H1 (cell line): ENCODE measurements at regions of chr11 and their contacts with region 1.

Region 1: GRCh38 chr11:125257190-125257579 is 92.6 kb downstream of the PKNOX2 start:
- DNase-seq: peak in 1 of 2 experiments; percentile 59
- H3K4me3 ChIP-seq: no peak overlapping the region
- H3K27ac ChIP-seq: no peak overlapping the region
- H3K4me1 ChIP-seq: peaks cover 3 to 18% (median 7%) of the 10 kb centered on the region in 4 experiments; a peak in 6 of 7 replicates
- H3K27me3 ChIP-seq: peaks cover 0 to 11% (median 8%) of the 10 kb centered on the region in 4 experiments; a peak in 3 of 7 replicates
- CTCF ChIP-seq: peak; percentile 57 to 79 (median 68)
- EP300 ChIP-seq: no peak
- POLR2A ChIP-seq: no peak
- RAD21 ChIP-seq: peak; percentile 64 to 78

Region 2: DNA sequence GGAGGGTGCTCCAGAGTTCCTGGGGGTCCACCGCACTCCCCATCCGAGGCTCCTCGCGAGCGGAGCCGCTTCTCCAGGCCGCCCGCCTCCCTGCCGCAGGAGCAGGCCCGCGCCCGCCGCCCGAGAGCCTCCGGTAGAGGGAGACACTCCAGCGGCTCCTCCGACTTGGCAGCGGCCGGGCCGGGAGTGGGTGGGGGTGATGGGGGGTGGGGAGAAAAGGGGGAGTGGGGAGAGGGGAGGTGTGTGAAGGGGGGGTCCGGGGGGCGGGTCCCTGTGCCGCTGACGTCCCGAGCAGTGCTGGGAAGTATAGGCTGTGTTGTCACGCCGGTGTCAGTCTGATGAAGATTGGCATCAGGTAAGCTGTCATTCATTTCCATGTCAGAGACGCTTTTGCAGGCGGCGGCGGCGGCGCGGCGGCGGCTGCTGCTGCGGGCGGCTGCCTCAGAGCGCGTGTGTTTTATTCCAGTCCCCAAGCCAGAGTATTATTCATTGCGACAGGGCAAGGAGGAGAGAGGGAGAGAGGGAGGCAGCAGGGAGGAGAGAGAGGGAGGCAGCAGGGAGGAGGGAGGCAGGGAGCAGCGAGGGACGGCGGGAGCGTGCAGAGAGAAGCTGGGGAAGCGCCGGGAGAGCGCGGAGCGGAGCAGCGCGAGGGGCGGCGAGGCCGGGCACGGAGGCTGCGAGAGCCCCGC is 92.6 kb before region 1 on chr11 and contains the start of gene PKNOX2:
- CTCF ChIA-PET with region 1: interaction called, 11 read pairs
- POLR2A ChIA-PET with region 1: interaction called, 15 read pairs
- DNase-seq: peak in 1 of 2 experiments; percentile 93
- H3K4me3 ChIP-seq: peak within 1 kb of the TSS; percentile 52 to 74 (median 60)
- H3K27ac ChIP-seq: peak within 1 kb of the TSS; percentile 87
- H3K4me1 ChIP-seq: peaks cover 21 to 44% (median 29%) of the 10 kb centered on the region in 4 experiments
- H3K27me3 ChIP-seq: peaks cover 14 to 44% (median 40%) of the 10 kb centered on the region in 4 experiments
- CTCF ChIP-seq: peak; percentile 45 to 72 (median 67)
- EP300 ChIP-seq: peak in 1 of 2 experiments; percentile 6; a peak in 1 of 3 replicates
- POLR2A ChIP-seq: no peak
- RAD21 ChIP-seq: peak; percentile 54 to 68; a peak in 3 of 4 replicates
- total RNA-seq, gene PKNOX2: 1.9 and 2.0 TPM in 2 replicates

Region 3: GRCh38 chr11:125214571-125215565 is 42.3 kb before region 1 on chr11:
- CTCF ChIA-PET with region 1: interaction called, 22 read pairs
- POLR2A ChIA-PET with region 1: no interaction called
- DNase-seq: no peak
- H3K4me3 ChIP-seq: no peak overlapping the region
- H3K27ac ChIP-seq: no peak overlapping the region; the same call in 1 of the 2 replicates
- H3K4me1 ChIP-seq: peaks cover 8 to 24% (median 14%) of the 10 kb centered on the region in 4 experiments
- H3K27me3 ChIP-seq: no peaks in the 10 kb centered on the region; a peak in 2 of 7 replicates
- CTCF ChIP-seq: no peak
- EP300 ChIP-seq: no peak
- POLR2A ChIP-seq: no peak
- RAD21 ChIP-seq: no peak

Region 4: DNA sequence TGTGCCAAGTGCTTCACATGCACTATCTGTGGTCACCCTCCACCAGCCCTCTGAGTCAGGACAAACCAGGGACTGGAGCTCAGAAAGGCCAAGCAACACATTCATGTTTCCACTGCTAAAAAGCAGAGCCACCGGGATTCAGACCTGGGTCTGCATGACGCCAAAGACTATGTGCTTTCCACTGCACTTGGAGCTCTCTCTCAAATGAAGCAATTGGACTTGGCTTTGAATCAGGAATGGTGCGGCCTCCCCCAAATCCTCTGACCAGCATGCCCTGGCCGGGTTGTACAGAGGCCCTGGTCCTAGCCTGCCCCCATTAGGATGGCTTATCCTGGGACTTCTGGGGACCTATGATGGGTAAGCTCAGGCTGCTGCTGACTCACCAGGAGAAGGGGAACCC is 11.9 kb before region 1 on chr11:
- CTCF ChIA-PET with region 1: interaction called, 22 read pairs
- POLR2A ChIA-PET with region 1: interaction called, 3 read pairs
- DNase-seq: no peak
- H3K4me3 ChIP-seq: no peak overlapping the region
- H3K27ac ChIP-seq: no peak overlapping the region
- H3K4me1 ChIP-seq: peaks cover 0 to 12% (median 3%) of the 10 kb centered on the region in 4 experiments; a peak in 5 of 7 replicates
- H3K27me3 ChIP-seq: 0 out of 7 replicates have a peak, but pooled peaks cover 0 to 2% (median 0%) of the 10 kb centered on the region in 4 experiments
- CTCF ChIP-seq: no peak
- EP300 ChIP-seq: no peak
- POLR2A ChIP-seq: no peak
- RAD21 ChIP-seq: no peak

Region 5: DNA sequence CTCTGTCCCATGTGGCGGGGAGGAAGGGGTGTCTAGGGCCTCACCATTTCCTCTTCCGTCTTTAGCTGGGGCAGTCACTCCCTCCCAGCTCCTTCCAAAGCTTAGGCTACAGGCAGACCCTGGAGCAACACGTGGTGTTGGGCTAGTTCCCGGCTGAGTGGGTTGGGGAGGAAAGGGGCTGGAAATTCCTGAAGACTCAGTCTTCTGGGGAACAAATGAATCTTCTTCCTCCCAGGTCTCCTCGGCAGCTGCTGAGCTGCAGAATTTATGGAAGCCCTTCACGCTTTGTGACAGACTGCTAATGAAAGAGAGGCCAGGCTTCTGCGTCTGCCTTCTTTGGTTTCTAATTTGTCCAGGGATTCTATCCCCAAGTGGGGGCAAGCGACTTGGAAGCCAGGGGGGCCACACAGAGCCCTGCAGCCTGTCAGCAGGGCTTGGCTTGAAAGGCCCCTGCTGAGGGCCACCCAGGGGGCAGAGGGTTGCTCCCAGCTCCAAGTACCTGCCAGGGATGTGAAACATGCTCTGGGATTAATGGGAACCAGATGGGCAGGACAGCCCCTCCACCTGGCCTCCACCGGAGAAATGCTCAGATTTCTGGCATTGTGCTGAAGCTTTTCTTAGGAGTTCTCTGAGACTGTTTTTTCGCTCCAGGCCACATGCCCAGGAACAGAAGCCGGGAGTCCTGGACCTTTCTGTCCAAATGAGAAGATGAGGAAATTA is 30.5 kb after region 1 on chr11:
- CTCF ChIA-PET with region 1: interaction called, 19 read pairs
- POLR2A ChIA-PET with region 1: interaction called, 3 read pairs
- DNase-seq: no peak
- H3K4me3 ChIP-seq: no peak overlapping the region
- H3K27ac ChIP-seq: no peak overlapping the region
- H3K4me1 ChIP-seq: peaks cover 0 to 9% (median 4%) of the 10 kb centered on the region in 4 experiments; a peak in 3 of 7 replicates
- H3K27me3 ChIP-seq: peaks cover 0 to 2% (median 0%) of the 10 kb centered on the region in 4 experiments; a peak in 2 of 7 replicates
- CTCF ChIP-seq: no peak
- EP300 ChIP-seq: no peak
- POLR2A ChIP-seq: no peak
- RAD21 ChIP-seq: no peak

Region 6: DNA sequence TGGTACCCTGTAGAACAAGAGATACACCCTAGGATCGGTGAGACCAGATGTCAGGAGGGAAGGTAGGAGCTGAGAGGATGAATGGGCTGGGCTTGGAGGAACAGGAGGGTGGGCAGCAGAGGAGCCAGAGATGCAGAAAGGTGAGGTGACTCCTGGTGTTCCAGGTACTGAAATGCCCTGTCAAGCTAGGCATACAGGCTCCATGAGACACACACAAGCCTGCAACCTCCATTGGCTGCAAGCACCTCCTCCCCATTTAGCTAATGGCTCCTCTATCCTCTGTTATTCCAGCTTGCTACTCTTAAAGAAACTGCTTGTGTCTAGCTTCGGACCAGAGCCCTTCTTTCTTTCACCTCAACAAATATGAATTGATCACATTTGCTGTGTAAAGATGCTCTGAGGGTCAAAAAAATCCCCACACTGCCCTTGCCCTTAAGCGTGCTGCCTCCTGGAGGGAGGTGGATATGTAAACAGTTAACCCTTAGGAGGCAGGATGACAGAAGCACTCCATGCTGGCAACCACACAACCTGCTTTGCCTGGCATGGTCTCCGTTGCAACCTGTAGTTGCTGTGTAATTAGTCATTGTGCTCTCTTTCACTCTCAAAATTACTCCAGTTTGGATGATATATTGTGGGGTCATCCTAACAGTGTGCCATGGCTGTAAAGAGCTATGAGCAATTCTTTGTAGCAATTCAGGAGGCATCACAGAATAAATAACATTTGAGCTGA is 63.3 kb after region 1 on chr11:
- CTCF ChIA-PET with region 1: interaction called, 11 read pairs
- POLR2A ChIA-PET with region 1: interaction called, 3 read pairs
- DNase-seq: no peak
- H3K4me3 ChIP-seq: no peak overlapping the region
- H3K27ac ChIP-seq: no peak overlapping the region
- H3K4me1 ChIP-seq: peaks cover 0 to 6% (median 3%) of the 10 kb centered on the region in 4 experiments; a peak in 4 of 7 replicates
- H3K27me3 ChIP-seq: no peaks in the 10 kb centered on the region
- CTCF ChIP-seq: peak in 2 of 3 experiments; percentile 4 to 38; a peak in 2 of 4 replicates
- EP300 ChIP-seq: no peak
- POLR2A ChIP-seq: no peak
- RAD21 ChIP-seq: peak; percentile 39 to 55